ENCODE measurements at regions of chr15 and their contacts with region 1.

Region 1: DNA sequence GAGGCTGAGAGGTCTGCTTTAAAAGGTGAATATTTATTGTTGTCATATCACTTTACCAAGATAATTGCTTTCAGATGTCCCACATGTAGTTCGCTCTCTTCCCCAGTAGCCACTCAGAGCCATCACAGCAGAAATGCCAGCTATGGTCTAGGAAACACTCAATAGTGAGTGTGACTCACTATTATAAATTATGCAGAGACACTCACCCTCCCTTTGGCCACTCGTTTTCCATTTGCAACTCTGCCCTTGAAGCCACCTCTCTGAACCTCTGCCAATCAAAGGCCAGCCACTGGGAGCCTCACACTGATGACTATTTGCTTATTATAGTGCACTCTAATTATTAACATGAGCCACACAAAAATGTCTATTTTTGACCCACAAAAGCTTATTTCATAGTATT is 328.1 kb upstream of the ATP10A start:
- DNase-seq: no peak
- H3K4me3 ChIP-seq: no peak overlapping the region
- H3K27ac ChIP-seq: no peak overlapping the region
- H3K4me1 ChIP-seq: peaks cover 0 to 2% (median 0%) of the 10 kb centered on the region in 4 experiments; a peak in 1 of 7 replicates
- H3K27me3 ChIP-seq: no peaks in the 10 kb centered on the region
- CTCF ChIP-seq: no peak
- EP300 ChIP-seq: no peak
- POLR2A ChIP-seq: no peak
- RAD21 ChIP-seq: no peak

Region 2: GRCh38 chr15:26146199-26146598 is 45.0 kb before region 1 on chr15:
- CTCF ChIA-PET with region 1: no interaction called
- POLR2A ChIA-PET with region 1: no interaction called
- DNase-seq: no peak
- H3K4me3 ChIP-seq: no peak overlapping the region
- H3K27ac ChIP-seq: no peak overlapping the region
- H3K4me1 ChIP-seq: no peaks in the 10 kb centered on the region
- H3K27me3 ChIP-seq: no peaks in the 10 kb centered on the region
- CTCF ChIP-seq: no peak
- EP300 ChIP-seq: no peak
- POLR2A ChIP-seq: no peak
- RAD21 ChIP-seq: no peak

Region 3: GRCh38 chr15:26179906-26180305 is 11.3 kb before region 1 on chr15:
- CTCF ChIA-PET with region 1: interaction called, 10 read pairs
- POLR2A ChIA-PET with region 1: no interaction called
- DNase-seq: peak; percentile 63 to 79
- H3K4me3 ChIP-seq: no peak overlapping the region
- H3K27ac ChIP-seq: no peak overlapping the region
- H3K4me1 ChIP-seq: peaks cover 0 to 8% (median 4%) of the 10 kb centered on the region in 4 experiments; a peak in 4 of 7 replicates
- H3K27me3 ChIP-seq: no peaks in the 10 kb centered on the region
- CTCF ChIP-seq: peak; percentile 64 to 97 (median 86)
- EP300 ChIP-seq: no peak
- POLR2A ChIP-seq: no peak
- RAD21 ChIP-seq: peak; percentile 91 to 98

Measured in H1 (cell line).